Activated B cell treated with CpG ODN at 0.5 μM for 24 hours (primary cell): ENCODE measurements at regions of chr2 and their contacts with region 1.

Region 1: DNA sequence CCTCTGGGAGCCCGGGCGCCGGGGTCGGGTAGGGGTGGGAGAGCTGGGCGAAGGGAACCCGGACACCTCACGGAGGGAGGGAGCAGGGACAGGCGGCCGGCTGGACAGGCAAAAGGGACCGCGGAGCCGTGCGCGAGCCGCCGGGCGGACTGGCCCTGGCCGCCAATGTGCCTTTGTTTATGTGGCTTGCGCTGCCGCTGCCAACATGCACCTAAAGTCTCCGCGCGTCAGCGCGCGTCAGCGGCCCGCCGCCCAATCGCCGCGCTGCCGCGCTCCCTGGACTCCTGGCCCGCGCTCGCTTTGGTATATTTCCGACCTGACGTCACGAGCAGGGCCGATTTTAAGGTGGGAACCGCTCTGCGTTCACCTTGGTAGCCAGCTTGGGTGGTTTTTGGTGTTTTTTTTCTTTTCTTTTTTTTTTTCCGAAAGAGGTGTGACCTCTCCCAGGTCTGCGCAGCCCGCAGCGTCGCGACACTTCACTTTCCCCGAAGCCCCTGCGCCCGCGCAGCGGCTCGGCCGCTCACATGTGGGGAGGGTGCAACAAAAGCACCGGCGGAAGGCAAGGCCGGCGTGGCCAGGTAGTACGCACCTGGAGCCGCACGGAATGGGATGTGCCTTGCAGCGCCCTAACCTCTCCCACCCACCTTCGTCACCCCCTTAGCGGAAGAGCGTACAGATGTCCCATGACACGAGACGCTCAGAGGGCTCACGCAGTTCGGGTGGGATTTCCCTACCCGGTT is at the start of gene NR4A2:
- DNase-seq: peak; percentile 81
- ATAC-seq: peak; percentile 56
- H3K4me3 Mint-ChIP-seq: peak within 1 kb of the TSS; percentile 91
- H3K27ac Mint-ChIP-seq: peak within 1 kb of the TSS; percentile 94
- H3K4me1 Mint-ChIP-seq: peaks cover 53% of the 10 kb centered on the region
- H3K27me3 Mint-ChIP-seq: peaks cover 26% of the 10 kb centered on the region
- CTCF ChIP-seq: no peak
- total RNA-seq, gene NR4A2: 6.7 and 7.5 TPM in 2 replicates

Region 2: GRCh38 chr2:155377266-155377680 is 955.4 kb before region 1 on chr2:
- CTCF ChIA-PET with region 1: no interaction called
- POLR2A ChIA-PET with region 1: no interaction called
- intact Hi-C with region 1: loop called (anchors 10 kb)
- DNase-seq: no peak
- ATAC-seq: no peak
- H3K4me3 Mint-ChIP-seq: no peak overlapping the region
- H3K27ac Mint-ChIP-seq: no peak overlapping the region
- H3K4me1 Mint-ChIP-seq: peaks cover 2% of the 10 kb centered on the region
- H3K27me3 Mint-ChIP-seq: no peaks in the 10 kb centered on the region
- CTCF ChIP-seq: no peak

Region 3: DNA sequence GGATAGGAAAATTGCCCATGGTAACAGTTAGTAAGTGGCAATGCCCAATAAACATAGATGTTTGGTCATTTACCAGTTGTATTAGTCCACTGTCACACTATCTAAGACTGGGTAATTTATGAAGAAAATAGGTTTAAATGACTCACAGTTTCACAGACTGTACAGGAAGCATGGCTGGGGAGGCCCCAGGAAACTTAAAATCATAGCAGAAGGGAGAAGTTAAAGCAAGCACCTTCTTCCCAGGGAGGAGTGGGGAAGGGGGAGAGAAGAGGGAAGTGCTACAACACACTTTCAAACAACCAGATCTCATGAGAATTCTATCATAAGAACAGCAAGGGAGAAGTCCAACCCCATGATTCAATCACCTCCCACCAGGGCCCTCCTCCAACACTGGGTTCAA is 23.5 kb before region 1 on chr2:
- CTCF ChIA-PET with region 1: no interaction called
- POLR2A ChIA-PET with region 1: no interaction called
- intact Hi-C with region 1: no loop called
- DNase-seq: no peak
- ATAC-seq: no peak
- H3K4me3 Mint-ChIP-seq: no peak overlapping the region
- H3K27ac Mint-ChIP-seq: no peak overlapping the region
- H3K4me1 Mint-ChIP-seq: peaks cover 10% of the 10 kb centered on the region
- H3K27me3 Mint-ChIP-seq: peaks cover 32% of the 10 kb centered on the region
- CTCF ChIP-seq: no peak

Region 4: DNA sequence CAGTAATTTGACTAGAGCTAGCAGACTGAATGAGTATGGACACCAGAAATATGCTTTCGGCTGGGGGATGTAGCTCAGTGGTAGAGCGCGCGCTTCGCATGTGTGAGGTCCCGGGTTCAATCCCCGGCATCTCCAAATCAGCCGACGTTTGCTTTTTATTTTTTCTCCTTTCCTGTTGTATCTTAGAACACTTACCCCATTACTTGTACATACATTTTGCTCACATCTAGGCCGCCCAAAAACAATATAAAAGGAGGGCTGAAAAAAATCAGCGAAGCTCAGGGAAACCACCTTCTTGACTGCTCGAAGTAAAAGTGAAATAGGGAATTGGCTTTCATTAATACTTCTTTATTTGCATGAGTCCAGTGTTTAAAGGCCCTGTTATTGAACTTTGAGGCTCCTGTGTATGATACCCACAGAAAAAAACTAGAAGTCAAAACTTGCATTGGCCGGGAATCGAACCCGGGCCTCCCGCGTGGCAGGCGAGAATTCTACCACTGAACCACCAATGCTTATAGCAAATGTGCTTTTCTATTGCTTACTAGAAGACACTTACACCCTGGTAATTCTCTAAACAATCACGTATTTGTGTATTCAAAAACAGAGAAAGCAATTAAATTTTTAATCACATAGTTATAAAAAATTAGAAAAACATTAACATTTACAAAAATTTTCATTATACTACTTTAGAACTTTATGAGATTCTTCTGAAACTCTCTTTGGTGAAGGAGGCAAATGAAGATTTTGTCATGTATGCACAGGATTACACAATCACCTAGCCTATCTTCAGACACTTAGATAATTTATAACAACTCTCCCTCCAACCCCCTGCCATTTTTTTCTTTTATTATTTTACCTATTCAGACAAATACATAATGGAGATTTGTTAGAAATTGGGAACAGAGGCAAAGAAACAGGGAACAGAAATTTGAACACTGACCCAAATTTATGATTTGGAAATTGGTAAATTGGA is 68.3 kb after region 1 on chr2:
- CTCF ChIA-PET with region 1: interaction called, 17 read pairs
- POLR2A ChIA-PET with region 1: interaction called, 66 read pairs
- intact Hi-C with region 1: loop called (anchors 1 kb)
- DNase-seq: peak; percentile 67
- ATAC-seq: peak; percentile 74
- H3K4me3 Mint-ChIP-seq: peak overlapping the region; percentile 96
- H3K27ac Mint-ChIP-seq: peak overlapping the region; percentile 99
- H3K4me1 Mint-ChIP-seq: peaks cover 29% of the 10 kb centered on the region
- H3K27me3 Mint-ChIP-seq: peaks cover 6% of the 10 kb centered on the region
- CTCF ChIP-seq: no peak

Region 5: GRCh38 chr2:156526950-156527636 is 194.4 kb after region 1 on chr2:
- CTCF ChIA-PET with region 1: no interaction called
- POLR2A ChIA-PET with region 1: no interaction called
- intact Hi-C with region 1: loop called (anchors 2 kb)
- DNase-seq: no peak
- ATAC-seq: peak; percentile 83
- H3K4me3 Mint-ChIP-seq: peak overlapping the region; percentile 38
- H3K27ac Mint-ChIP-seq: peak overlapping the region; percentile 41
- H3K4me1 Mint-ChIP-seq: peaks cover 9% of the 10 kb centered on the region
- H3K27me3 Mint-ChIP-seq: no peaks in the 10 kb centered on the region
- CTCF ChIP-seq: no peak

Region 6: GRCh38 chr2:156589381-156590079 is 256.8 kb after region 1 on chr2:
- CTCF ChIA-PET with region 1: interaction called, 60 read pairs
- POLR2A ChIA-PET with region 1: interaction called, 27 read pairs
- intact Hi-C with region 1: loop called (anchors 1 kb)
- DNase-seq: no peak
- ATAC-seq: peak; percentile 54
- H3K4me3 Mint-ChIP-seq: no peak overlapping the region
- H3K27ac Mint-ChIP-seq: no peak overlapping the region
- H3K4me1 Mint-ChIP-seq: peaks cover 2% of the 10 kb centered on the region
- H3K27me3 Mint-ChIP-seq: no peaks in the 10 kb centered on the region
- CTCF ChIP-seq: no peak

Region 7: DNA sequence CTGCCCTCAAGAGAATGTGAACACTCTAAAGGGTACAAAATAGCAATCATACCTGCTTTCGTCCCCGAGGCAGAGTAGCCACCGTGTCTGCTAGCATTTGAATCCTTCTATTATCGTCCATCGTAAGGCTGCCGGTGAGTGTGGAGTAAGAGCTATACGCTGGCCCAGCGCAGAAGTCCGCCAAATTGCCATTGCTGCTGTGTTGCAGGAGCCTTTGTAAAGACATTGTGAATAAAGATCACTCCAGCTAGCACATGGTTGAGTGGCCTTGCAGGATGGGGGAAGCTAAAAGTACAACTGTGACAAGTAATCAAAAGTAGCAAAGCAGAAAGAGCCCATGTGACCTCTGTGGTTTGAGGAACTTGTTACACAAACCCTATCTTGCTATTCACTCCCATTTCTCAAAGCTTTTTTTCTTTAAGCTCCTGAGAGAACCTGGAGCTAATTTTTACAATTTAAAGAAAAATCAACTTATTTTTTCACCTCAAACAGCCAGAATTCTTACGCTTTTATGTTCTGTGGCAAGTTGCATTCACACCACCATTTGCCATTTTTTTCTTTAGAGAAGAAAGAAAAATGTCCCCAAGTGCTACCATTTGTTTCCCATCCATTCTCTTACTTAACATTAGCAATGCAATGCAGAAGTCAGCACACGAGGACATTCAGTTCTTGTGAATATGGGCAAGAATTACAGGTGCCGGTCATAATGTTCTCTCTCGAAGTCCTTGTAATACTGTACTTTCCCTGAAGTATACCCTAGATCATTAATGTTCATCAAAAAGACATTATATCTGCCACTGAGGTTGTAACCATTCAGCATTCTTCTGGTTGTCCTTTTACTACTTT is 1111.3 kb after region 1 on chr2 and contains the start of gene CYTIP:
- CTCF ChIA-PET with region 1: no interaction called
- POLR2A ChIA-PET with region 1: interaction called, 4 read pairs
- intact Hi-C with region 1: loop called (anchors 1 kb)
- DNase-seq: peak; percentile 52
- ATAC-seq: peak; percentile 53
- H3K4me3 Mint-ChIP-seq: peak within 1 kb of the TSS; percentile 95
- H3K27ac Mint-ChIP-seq: peak within 1 kb of the TSS; percentile 96
- H3K4me1 Mint-ChIP-seq: peaks cover 61% of the 10 kb centered on the region
- H3K27me3 Mint-ChIP-seq: no peaks in the 10 kb centered on the region
- CTCF ChIP-seq: no peak
- total RNA-seq, gene CYTIP: 129 and 130 TPM in 2 replicates

Region 8: DNA sequence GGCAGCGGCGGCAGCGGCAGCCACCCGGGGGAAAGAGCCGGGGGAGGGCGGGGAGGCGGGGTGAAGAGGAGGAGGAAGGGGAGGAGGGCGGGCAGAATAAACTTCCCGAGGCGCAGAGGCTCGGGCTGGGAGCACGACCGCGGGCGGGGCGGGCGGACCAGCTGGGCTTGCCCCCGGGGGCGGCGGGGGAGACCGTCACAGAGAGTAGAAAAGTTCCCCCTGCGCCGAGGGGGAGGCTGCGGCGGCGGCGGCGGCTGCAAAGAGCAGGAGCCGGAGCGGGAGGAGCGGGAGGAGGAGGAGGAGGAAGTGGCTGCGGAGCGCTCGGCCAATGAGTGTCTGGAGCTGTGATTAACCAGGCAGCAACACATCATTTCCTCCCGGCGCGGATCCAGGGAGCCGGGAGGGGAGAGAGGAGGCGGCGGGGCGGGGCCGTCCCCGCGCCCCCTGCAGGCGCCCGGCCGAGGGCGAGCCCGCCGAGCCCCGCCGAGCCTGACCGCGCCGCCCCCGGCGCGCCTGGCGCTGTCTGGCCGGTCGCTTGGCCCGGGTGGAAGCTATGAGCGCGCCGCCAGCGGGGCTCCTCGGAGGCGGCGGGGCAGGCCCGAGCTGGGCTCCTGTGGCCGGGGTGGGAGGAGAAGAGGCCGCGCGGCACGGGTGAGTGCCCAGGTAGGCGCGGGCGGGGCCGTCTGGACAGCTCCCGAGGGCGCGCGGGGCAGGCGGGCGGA is 1543.5 kb after region 1 on chr2 and contains the start of gene ACVR1:
- CTCF ChIA-PET with region 1: no interaction called
- POLR2A ChIA-PET with region 1: no interaction called
- intact Hi-C with region 1: loop called (anchors 5 kb)
- DNase-seq: peak; percentile 76
- ATAC-seq: peak; percentile 80
- H3K4me3 Mint-ChIP-seq: peak within 1 kb of the TSS; percentile 88
- H3K27ac Mint-ChIP-seq: peak within 1 kb of the TSS; percentile 76
- H3K4me1 Mint-ChIP-seq: peaks cover 21% of the 10 kb centered on the region
- H3K27me3 Mint-ChIP-seq: no peaks in the 10 kb centered on the region
- CTCF ChIP-seq: no peak
- total RNA-seq, gene ACVR1: 4.4 and 4.6 TPM in 2 replicates